ENCODE measurements at regions of chr20 and their contacts with region 1.

Region 1: DNA sequence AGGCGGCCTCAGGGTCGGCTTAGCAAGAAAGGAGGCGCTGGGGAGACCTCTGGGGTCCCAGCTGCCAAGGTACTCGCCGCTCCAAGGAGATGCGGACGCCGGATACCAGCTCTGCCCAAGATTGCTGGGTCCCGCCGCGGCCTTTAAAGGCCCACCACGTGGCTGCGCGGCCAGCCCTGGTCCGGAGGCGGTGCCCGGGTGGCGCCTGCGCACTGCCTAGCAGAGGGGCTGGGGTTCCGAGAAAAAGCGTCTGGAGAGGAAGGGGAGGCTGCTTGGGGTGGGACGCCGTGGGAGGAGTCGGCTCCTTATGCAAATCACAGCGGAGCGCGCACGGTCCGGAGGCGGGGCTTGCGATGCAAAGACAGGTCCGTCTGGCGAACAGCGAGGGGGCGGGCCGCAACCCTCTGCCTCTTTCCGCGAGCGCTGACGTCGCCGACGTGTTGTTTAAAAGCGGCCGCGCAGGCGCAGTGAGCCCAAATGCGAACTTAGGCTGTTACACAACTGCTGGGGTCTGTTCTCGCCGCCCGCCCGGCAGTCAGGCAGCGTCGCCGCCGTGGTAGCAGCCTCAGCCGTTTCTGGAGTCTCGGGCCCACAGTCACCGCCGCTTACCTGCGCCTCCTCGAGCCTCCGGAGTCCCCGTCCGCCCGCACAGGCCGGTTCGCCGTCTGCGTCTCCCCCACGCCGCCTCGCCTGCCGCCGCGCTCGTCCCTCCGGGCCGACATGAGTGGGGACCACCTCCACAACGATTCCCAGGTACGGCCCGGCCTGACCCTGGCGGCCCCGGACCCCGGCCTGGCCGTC is at the start of gene TOP1:
- DNase-seq: peak; percentile 98
- ATAC-seq: peak; percentile 93
- H3K4me3 ChIP-seq: peak within 1 kb of the TSS; percentile 97
- H3K27ac ChIP-seq: peak within 1 kb of the TSS; percentile 95
- H3K4me1 ChIP-seq: peaks cover 5% of the 10 kb centered on the region
- H3K27me3 ChIP-seq: no peaks in the 10 kb centered on the region
- CTCF ChIP-seq: no peak
- EP300 ChIP-seq: no peak
- POLR2A ChIP-seq: peak; percentile 96
- RAD21 ChIP-seq: no peak
- polyA plus RNA-seq, gene TOP1: 36.1 to 47.6 TPM

Region 2: DNA sequence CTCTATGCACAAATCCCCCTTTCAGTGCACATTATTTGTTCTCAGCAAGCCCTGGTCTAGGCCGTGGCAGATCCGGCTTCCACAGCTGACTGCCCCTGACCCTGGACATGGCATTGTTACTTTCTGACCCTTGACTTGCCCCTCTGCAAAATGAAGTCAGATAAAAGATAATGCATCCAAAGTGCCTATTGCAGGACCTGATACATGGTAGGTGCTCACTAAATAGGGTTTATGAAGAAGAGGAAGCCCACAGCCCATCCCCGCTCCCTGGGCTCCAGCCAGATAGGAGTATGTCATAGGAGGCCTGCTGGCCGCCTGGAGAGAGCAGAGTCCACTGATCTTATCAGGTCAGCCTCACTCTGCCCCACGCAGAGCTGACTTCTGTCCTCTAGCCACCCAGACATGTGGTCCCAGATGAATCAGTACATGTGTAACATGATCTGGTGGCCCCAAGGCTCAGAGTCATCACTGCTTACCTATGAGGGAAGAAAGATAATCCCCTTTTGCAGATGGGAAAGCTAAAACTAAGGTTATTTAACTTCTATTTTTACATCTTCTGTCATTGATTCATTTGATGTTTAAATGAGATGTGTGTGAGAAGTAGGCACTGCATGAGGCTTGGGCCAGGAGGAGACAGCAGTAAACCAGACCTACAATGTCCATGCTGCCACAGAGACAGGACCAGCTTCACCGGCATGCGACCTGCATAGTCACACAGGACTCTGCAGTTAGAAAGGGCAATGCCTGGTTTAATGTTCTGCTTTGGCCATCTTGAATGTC is 359.9 kb before region 1 on chr20:
- CTCF ChIA-PET with region 1: no interaction called
- POLR2A ChIA-PET with region 1: no interaction called
- RAD21 ChIA-PET with region 1: no interaction called
- SMC1A ChIA-PET with region 1: no interaction called
- in situ Hi-C with region 1: no loop called
- intact Hi-C with region 1: no loop called
- DNase-seq: no peak
- ATAC-seq: no peak
- H3K4me3 ChIP-seq: no peak overlapping the region
- H3K27ac ChIP-seq: no peak overlapping the region
- H3K4me1 ChIP-seq: no peaks in the 10 kb centered on the region
- H3K27me3 ChIP-seq: no peaks in the 10 kb centered on the region
- CTCF ChIP-seq: no peak
- EP300 ChIP-seq: no peak
- POLR2A ChIP-seq: no peak
- RAD21 ChIP-seq: no peak

Region 3: GRCh38 chr20:40945754-40946450 is 82.6 kb before region 1 on chr20:
- CTCF ChIA-PET with region 1: no interaction called
- POLR2A ChIA-PET with region 1: no interaction called
- RAD21 ChIA-PET with region 1: no interaction called
- SMC1A ChIA-PET with region 1: no interaction called
- in situ Hi-C with region 1: no loop called
- intact Hi-C with region 1: no loop called
- DNase-seq: no peak
- ATAC-seq: peak; percentile 78
- H3K4me3 ChIP-seq: no peak overlapping the region
- H3K27ac ChIP-seq: no peak overlapping the region
- H3K4me1 ChIP-seq: peaks cover 14% of the 10 kb centered on the region
- H3K27me3 ChIP-seq: no peaks in the 10 kb centered on the region
- CTCF ChIP-seq: peak; percentile 52 to 63 (median 60); a peak in 5 of 6 replicates
- EP300 ChIP-seq: no peak
- POLR2A ChIP-seq: no peak
- RAD21 ChIP-seq: peak; percentile 70

Region 4: DNA sequence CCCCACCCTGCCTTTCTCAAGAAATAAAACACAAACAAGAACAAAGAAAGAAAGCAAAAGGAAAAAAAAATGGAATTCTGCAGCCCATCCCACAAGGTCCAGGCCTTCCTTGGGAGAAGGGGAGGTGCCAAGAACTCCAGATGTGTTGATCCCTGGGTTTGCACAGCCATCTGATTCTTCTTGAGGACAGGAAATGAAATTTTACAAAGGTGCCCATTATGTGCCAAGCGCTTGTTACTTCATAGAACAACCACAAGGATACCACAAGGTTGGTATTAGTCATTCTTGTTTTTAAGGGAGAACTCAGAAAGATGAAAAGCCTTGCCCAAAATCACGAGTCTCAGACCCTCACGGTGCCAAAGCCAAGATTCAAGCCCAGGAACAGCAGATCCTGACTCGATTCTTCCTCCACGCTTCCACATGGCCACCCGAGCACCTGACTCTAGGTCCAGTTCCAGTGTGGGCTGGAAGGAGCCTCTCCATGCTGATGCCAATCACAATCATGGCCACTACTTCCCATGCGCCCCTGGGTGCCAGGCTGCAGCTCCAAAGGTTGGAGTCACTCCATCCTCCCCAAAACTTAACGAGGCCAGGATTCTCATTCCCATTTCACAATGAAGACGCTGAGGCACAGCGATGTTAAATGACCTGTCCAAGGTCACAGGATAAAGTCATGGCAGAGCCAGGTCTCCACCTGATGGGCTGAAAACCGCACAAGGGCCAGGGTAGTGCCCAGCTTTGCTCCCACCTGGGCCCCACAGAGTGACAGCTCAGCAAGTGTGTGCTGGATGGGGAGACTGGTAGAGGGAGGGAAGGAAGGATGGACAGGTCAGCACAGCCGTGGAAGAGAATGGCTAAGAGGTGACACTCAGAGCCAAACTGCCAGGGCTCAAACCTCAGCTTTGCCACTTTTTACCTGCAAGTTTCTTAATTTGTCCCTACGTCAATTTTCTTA is 66.6 kb before region 1 on chr20:
- CTCF ChIA-PET with region 1: no interaction called
- POLR2A ChIA-PET with region 1: no interaction called
- RAD21 ChIA-PET with region 1: no interaction called
- SMC1A ChIA-PET with region 1: no interaction called
- in situ Hi-C with region 1: no loop called
- intact Hi-C with region 1: no loop called
- DNase-seq: no peak
- ATAC-seq: peak; percentile 33
- H3K4me3 ChIP-seq: no peak overlapping the region
- H3K27ac ChIP-seq: no peak overlapping the region
- H3K4me1 ChIP-seq: no peaks in the 10 kb centered on the region
- H3K27me3 ChIP-seq: no peaks in the 10 kb centered on the region; a peak in 1 of 4 replicates
- CTCF ChIP-seq: no peak
- EP300 ChIP-seq: no peak
- POLR2A ChIP-seq: no peak
- RAD21 ChIP-seq: no peak

Region 5: DNA sequence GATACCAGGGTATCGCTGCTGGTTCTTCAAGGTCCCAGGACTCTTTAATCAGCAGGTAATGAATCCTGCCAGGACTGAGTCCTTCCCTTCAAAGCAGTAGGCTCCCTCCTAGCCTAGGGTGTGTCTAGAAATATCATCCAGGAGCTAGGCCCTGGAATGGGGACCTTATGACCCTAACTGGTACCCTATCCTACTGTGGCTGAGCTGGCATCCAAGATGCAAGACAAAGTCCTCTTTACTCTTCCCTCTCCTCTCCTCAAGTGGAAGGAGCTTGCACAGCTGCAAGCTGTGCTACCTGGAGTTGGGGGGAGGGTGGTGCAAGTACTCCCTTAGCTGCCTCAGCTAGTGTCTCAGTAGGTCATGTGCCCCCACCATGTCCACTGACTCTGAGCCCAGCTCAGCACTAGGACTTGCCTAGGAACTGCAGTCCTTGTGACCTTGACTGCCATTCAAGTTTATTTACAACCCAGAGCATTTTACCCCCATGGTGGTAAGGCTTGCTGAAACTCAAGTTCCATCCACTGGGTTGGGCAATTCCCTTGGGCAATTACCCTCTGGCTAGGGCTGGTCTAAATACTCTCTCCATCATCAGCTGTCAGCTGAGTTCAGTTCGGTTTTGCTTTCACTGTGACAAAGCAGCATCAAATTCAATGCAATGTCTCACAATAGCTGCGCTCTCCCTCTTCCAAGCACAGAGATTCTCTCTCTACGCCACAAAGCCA is 48.3 kb before region 1 on chr20:
- CTCF ChIA-PET with region 1: interaction called, 510 read pairs
- POLR2A ChIA-PET with region 1: interaction called, 13 read pairs
- RAD21 ChIA-PET with region 1: interaction called, 696 read pairs
- SMC1A ChIA-PET with region 1: interaction called, 43 read pairs
- in situ Hi-C with region 1: no loop called
- intact Hi-C with region 1: no loop called
- DNase-seq: peak; percentile 83
- ATAC-seq: peak; percentile 86
- H3K4me3 ChIP-seq: peak overlapping the region; percentile 20; the same call in 1 of the 2 replicates
- H3K27ac ChIP-seq: peak overlapping the region; percentile 75
- H3K4me1 ChIP-seq: peaks cover 32% of the 10 kb centered on the region
- H3K27me3 ChIP-seq: no peaks in the 10 kb centered on the region
- CTCF ChIP-seq: no peak
- EP300 ChIP-seq: peak; percentile 6 to 48; a peak in 2 of 4 replicates
- POLR2A ChIP-seq: 0 out of 2 replicates have a peak, but pooled peaks have one; percentile 39
- RAD21 ChIP-seq: 0 out of 2 replicates have a peak, but pooled peaks have one; percentile 23

Region 6: GRCh38 chr20:41011551-41012067 is 16.9 kb before region 1 on chr20:
- CTCF ChIA-PET with region 1: interaction called, 5 read pairs
- POLR2A ChIA-PET with region 1: interaction called, 12 read pairs
- RAD21 ChIA-PET with region 1: interaction called, 30 read pairs
- SMC1A ChIA-PET with region 1: interaction called, 104 read pairs
- in situ Hi-C with region 1: no loop called
- intact Hi-C with region 1: no loop called
- DNase-seq: peak; percentile 95
- ATAC-seq: peak; percentile 95
- H3K4me3 ChIP-seq: peak overlapping the region; percentile 38
- H3K27ac ChIP-seq: peak overlapping the region; percentile 91
- H3K4me1 ChIP-seq: peaks cover 44% of the 10 kb centered on the region
- H3K27me3 ChIP-seq: no peaks in the 10 kb centered on the region
- CTCF ChIP-seq: no peak
- EP300 ChIP-seq: peak; percentile 83 to 88
- POLR2A ChIP-seq: no peak
- RAD21 ChIP-seq: peak; percentile 30; the same call in 1 of the 2 replicates

Region 7: GRCh38 chr20:41047975-41048305 is 19.4 kb after region 1 on chr20:
- CTCF ChIA-PET with region 1: interaction called, 98 read pairs
- POLR2A ChIA-PET with region 1: interaction called, 214 read pairs
- RAD21 ChIA-PET with region 1: interaction called, 111 read pairs
- SMC1A ChIA-PET with region 1: interaction called, 178 read pairs
- in situ Hi-C with region 1: no loop called
- intact Hi-C with region 1: no loop called
- DNase-seq: no peak
- ATAC-seq: peak; percentile 69
- H3K4me3 ChIP-seq: peak overlapping the region; percentile 64
- H3K27ac ChIP-seq: peak overlapping the region; percentile 76
- H3K4me1 ChIP-seq: peaks cover 44% of the 10 kb centered on the region
- H3K27me3 ChIP-seq: no peaks in the 10 kb centered on the region
- CTCF ChIP-seq: no peak
- EP300 ChIP-seq: no peak
- POLR2A ChIP-seq: no peak
- RAD21 ChIP-seq: no peak

Region 8: DNA sequence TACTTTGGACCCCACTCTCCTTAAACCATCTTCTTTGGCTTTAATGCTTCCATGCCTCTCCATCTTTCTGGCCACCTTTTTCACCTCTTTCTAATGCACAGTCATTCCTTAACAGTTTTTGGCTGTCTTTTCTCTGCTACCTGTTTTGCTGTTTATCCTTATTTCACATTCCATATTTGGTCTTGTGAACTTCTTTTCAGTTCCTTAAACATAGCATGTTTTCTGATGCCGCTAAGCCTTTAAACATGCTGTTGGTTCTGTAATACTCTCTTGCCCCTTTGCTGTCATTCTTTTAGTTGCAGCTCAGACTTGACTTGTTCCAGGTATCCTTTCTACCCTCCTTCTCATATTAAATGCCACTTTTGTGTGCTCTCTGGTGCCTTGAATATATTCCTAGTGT is 35.8 kb after region 1 on chr20:
- CTCF ChIA-PET with region 1: interaction called, 32 read pairs
- POLR2A ChIA-PET with region 1: interaction called, 4 read pairs
- RAD21 ChIA-PET with region 1: interaction called, 15 read pairs
- SMC1A ChIA-PET with region 1: interaction called, 37 read pairs
- in situ Hi-C with region 1: no loop called
- intact Hi-C with region 1: no loop called
- DNase-seq: peak; percentile 68
- ATAC-seq: peak; percentile 93
- H3K4me3 ChIP-seq: no peak overlapping the region
- H3K27ac ChIP-seq: peak overlapping the region; percentile 62
- H3K4me1 ChIP-seq: peaks cover 20% of the 10 kb centered on the region
- H3K27me3 ChIP-seq: no peaks in the 10 kb centered on the region
- CTCF ChIP-seq: peak; percentile 8 to 59 (median 36); a peak in 3 of 6 replicates
- EP300 ChIP-seq: no peak; a peak in 1 of 4 replicates
- POLR2A ChIP-seq: no peak
- RAD21 ChIP-seq: peak; percentile 77

Measured in GM12878 (cell line).